ENCODE measurements at regions of chr11 and their contacts with region 1.

Region 1: DNA sequence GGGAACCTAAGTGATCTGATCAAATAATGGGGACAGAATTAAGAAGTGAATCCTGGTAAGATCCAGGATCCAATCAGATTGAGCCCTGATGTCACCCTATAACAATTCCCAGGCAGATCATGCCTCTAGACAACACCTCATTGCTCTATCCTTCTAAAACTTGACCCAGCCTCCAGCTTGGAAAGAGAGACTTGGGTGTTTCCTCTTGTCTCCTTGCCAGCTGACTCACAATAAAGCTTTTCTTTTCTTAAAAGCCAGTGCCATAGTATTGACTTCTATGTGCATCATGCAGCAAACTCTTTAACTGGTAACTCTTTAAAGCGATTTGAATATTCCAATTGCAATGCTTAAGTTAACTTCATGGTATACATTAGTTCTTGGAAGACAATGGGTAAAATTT is 109.6 kb upstream of the CHORDC1 start:
- DNase-seq: no peak
- ATAC-seq: no peak

Region 2: GRCh38 chr11:90855531-90855930 is 523.1 kb after region 1 on chr11:
- intact Hi-C with region 1: no loop called
- DNase-seq: no peak
- ATAC-seq: no peak

Region 3: DNA sequence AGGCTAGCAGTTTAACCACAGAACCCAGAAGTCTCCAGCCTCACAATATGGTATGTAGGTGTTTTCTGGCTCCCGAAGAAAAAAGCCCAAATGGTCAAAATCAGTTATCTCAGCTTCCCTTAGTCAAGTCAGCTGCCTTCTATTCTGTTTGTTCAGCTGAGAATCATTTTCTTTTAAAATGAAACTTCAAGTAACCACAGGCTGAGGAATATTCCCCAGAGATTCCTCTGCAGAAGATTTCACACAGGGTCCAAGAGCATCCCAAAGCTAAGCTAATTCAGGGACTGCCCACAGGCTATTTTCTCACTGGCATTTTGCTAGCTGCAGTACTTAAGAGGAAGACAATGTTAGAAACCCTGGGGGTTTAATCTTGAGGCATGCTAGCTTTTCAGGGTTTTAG is 867.5 kb after region 1 on chr11:
- intact Hi-C with region 1: loop called (anchors 5 kb)
- DNase-seq: no peak
- ATAC-seq: no peak

Measured in Right ventricle myocardium inferior (tissue), 1 donor.